Activated CD4-positive, alpha-beta memory T cell treated with anti-CD3 and anti-CD28 coated beads for 36 hours (primary cell): ENCODE measurements at regions of chr6 and their contacts with region 1.

Region 1: GRCh38 chr6:24991810-24992467 is 56.2 kb upstream of the RIPOR2 start:
- DNase-seq: peak; percentile 81
- H3K4me3 Mint-ChIP-seq: peak overlapping the region; percentile 11
- H3K27ac Mint-ChIP-seq: peak overlapping the region; percentile 76
- H3K4me1 Mint-ChIP-seq: peaks cover 68% of the 10 kb centered on the region
- H3K27me3 Mint-ChIP-seq: no peaks in the 10 kb centered on the region

Region 2: GRCh38 chr6:24614043-24614420 is 377.9 kb before region 1 on chr6:
- CTCF ChIA-PET with region 1: no interaction called
- POLR2A ChIA-PET with region 1: no interaction called
- intact Hi-C with region 1: no loop called
- DNase-seq: no peak
- H3K4me3 Mint-ChIP-seq: no peak overlapping the region
- H3K27ac Mint-ChIP-seq: no peak overlapping the region
- H3K4me1 Mint-ChIP-seq: no peaks in the 10 kb centered on the region
- H3K27me3 Mint-ChIP-seq: peaks cover 5% of the 10 kb centered on the region

Region 3: GRCh38 chr6:24855395-24856245 is 136.3 kb before region 1 on chr6:
- CTCF ChIA-PET with region 1: interaction called, 191 read pairs
- POLR2A ChIA-PET with region 1: interaction called, 7 read pairs
- intact Hi-C with region 1: loop called (anchors 1 kb)
- DNase-seq: peak; percentile 81
- H3K4me3 Mint-ChIP-seq: peak overlapping the region; percentile 17
- H3K27ac Mint-ChIP-seq: peak overlapping the region; percentile 89
- H3K4me1 Mint-ChIP-seq: peaks cover 56% of the 10 kb centered on the region
- H3K27me3 Mint-ChIP-seq: no peaks in the 10 kb centered on the region

Region 4: GRCh38 chr6:24888715-24889370 is 103.1 kb before region 1 on chr6:
- CTCF ChIA-PET with region 1: interaction called, 23 read pairs
- POLR2A ChIA-PET with region 1: no interaction called
- intact Hi-C with region 1: no loop called
- DNase-seq: no peak
- H3K4me3 Mint-ChIP-seq: no peak overlapping the region
- H3K27ac Mint-ChIP-seq: peak overlapping the region; percentile 77
- H3K4me1 Mint-ChIP-seq: peaks cover 84% of the 10 kb centered on the region
- H3K27me3 Mint-ChIP-seq: no peaks in the 10 kb centered on the region

Region 5: DNA sequence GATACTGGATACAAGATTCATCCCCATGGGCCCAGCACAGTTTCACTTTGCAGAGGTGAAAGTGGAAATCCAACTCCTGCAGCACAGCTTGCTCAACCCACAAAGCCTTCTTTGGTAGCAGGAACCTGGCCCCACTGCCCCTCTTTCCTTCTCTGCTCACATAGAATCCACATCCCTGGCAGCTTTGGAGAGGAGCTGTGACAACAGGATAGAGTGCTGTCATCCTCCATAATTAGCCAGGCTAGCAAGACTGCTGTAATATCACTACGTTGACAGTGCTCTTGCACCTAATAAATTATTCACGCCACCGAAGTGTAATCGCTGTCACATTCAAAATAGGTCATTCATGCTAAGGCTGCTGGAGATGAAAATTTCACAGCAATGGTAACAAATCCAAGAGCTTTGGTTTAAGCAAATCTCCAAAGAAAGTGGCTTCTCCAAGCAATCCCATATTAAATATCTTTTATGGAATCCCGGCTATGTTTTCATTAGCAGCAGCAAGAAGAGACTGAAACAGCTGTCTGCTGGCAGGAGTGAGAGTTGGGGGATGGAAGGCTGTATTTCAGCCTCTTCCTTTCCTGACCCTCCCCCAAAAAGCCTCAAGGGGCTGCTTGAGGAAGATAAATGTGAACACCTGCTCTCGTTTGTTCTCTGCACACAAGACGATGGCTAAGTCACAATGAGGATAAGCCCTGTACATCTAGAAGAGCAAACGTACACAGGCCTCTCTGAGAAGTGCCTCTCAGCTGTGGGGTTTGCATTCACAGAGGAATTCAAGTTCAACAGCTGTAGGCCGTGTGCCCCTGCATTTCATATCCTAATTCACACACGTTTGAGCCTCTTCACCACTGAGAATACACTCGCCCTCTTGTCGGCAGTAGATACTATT is 72.7 kb before region 1 on chr6:
- CTCF ChIA-PET with region 1: interaction called, 80 read pairs
- POLR2A ChIA-PET with region 1: interaction called, 4 read pairs
- intact Hi-C with region 1: no loop called
- DNase-seq: peak; percentile 51
- H3K4me3 Mint-ChIP-seq: peak overlapping the region; percentile 56
- H3K27ac Mint-ChIP-seq: peak overlapping the region; percentile 85
- H3K4me1 Mint-ChIP-seq: peaks cover 88% of the 10 kb centered on the region
- H3K27me3 Mint-ChIP-seq: no peaks in the 10 kb centered on the region

Region 6: DNA sequence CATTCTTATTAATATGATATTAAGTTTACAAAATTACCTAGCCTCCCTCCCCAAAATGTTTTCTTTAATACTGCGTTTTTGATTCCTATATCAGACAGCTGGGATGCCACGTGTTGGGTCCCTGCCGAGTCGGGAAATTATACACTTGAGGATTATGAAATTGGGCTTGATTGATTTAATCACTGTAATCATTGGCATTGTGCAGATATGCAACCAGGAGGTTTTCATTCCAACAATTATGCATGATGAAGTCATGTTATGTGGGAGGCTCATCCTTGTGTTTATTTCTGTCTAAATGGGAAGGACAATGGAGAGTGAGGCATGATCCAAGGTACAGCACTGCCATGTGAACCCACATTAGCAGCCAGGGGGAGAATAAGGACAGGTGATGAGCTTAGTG is 25.6 kb before region 1 on chr6:
- CTCF ChIA-PET with region 1: interaction called, 17 read pairs
- POLR2A ChIA-PET with region 1: interaction called, 3 read pairs
- intact Hi-C with region 1: no loop called
- DNase-seq: no peak
- H3K4me3 Mint-ChIP-seq: no peak overlapping the region
- H3K27ac Mint-ChIP-seq: no peak overlapping the region
- H3K4me1 Mint-ChIP-seq: peaks cover 66% of the 10 kb centered on the region
- H3K27me3 Mint-ChIP-seq: no peaks in the 10 kb centered on the region

Region 7: DNA sequence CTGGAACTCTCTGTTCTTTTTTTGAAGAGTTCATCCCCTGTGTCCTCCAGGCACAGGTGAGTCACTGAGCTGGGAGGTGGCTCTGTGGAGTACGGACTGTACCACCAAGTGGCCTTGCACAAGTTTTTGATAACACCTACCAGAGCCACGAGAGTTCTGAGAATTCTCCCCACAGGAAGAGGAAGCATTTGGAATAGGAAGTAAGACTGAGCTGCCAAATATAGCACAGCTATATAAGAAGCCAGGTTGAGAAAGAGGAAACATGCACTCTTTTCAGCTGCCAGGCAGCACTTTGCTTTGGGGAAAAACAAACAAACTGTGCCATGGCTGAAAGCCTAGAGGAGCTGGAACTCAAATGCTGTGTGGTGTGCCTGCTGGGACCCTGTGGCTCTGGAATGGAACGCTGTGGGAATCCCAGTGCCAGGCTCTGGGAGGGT is 14.6 kb after region 1 on chr6:
- CTCF ChIA-PET with region 1: interaction called, 82 read pairs
- POLR2A ChIA-PET with region 1: interaction called, 3 read pairs
- intact Hi-C with region 1: no loop called
- DNase-seq: peak; percentile 66
- H3K4me3 Mint-ChIP-seq: peak overlapping the region; percentile 10
- H3K27ac Mint-ChIP-seq: peak overlapping the region; percentile 78
- H3K4me1 Mint-ChIP-seq: peaks cover 77% of the 10 kb centered on the region
- H3K27me3 Mint-ChIP-seq: no peaks in the 10 kb centered on the region

Region 8: GRCh38 chr6:25070547-25071366 is 78.8 kb after region 1 on chr6:
- CTCF ChIA-PET with region 1: interaction called, 24 read pairs
- POLR2A ChIA-PET with region 1: no interaction called
- intact Hi-C with region 1: no loop called
- DNase-seq: peak; percentile 90
- H3K4me3 Mint-ChIP-seq: peak overlapping the region; percentile 44
- H3K27ac Mint-ChIP-seq: peak overlapping the region; percentile 78
- H3K4me1 Mint-ChIP-seq: peaks cover 10% of the 10 kb centered on the region
- H3K27me3 Mint-ChIP-seq: no peaks in the 10 kb centered on the region

Region 9: GRCh38 chr6:25324066-25324762 is 332.3 kb after region 1 on chr6:
- CTCF ChIA-PET with region 1: no interaction called
- POLR2A ChIA-PET with region 1: no interaction called
- intact Hi-C with region 1: no loop called
- DNase-seq: no peak
- H3K4me3 Mint-ChIP-seq: no peak overlapping the region
- H3K27ac Mint-ChIP-seq: no peak overlapping the region
- H3K4me1 Mint-ChIP-seq: no peaks in the 10 kb centered on the region
- H3K27me3 Mint-ChIP-seq: no peaks in the 10 kb centered on the region